ENCODE measurements at regions of chr22 and their contacts with region 1.

Region 1: DNA sequence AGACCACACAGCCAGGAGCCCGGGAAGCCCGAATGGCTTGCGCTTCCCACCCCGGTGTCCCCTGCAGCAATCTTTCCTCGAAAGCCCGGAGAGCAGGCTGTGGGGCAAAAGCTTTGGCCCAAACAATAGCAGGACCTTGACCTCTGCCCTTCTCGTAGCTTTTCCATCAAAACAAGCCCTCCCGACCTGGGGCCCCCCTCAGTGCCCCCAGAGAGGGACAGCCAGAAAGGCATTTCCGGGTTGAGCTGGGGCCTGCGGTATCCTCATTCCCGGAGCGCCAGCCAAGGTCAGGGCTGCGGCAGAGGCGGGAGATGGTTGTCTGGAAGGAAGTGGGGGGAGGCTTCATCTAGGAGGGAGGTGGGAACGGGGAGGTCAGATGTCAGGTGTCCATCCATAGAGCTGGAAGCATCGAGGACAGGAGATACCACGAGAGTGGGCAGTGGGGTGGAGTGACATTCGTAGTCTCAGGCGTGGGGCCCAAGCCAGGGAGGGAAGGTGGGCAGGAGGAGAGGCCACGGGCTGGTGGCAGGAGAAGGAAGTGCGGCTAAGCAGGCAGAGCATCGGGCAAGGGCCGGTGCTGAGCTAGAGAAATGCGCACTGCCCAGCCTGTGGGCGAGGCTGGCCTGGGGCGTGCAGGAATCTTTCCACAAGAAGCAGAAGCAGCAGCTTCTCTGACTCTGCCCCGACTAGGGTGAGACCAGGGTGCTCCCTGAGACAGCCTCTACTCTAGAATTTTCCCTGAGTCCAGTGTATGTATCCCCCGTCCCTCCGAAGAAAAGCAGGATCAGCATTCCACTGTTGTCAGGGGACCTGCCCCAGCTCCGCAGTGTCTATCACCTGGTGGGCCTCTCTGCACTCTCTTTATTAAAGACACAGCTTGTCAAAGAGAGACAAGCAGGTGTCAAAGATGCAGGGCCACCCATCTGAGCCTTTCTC is 14.3 kb downstream of the PDGFB start:
- DNase-seq: no peak
- ATAC-seq: peak; percentile 60 to 67; a peak in 4 of 6 replicates
- H3K4me3 ChIP-seq: no peak overlapping the region
- H3K27ac ChIP-seq: no peak overlapping the region
- H3K4me1 ChIP-seq: peaks cover 2% of the 10 kb centered on the region; the same call in 1 of the 3 replicates
- CTCF ChIP-seq: no peak
- EP300 ChIP-seq: no peak
- POLR2A ChIP-seq: no peak
- RAD21 ChIP-seq: no peak

Region 2: GRCh38 chr22:39240828-39241793 is 10.6 kb after region 1 on chr22:
- CTCF ChIA-PET with region 1: interaction called, 10 read pairs
- POLR2A ChIA-PET with region 1: no interaction called
- DNase-seq: peak; percentile 29 to 61
- ATAC-seq: peak in 1 of 2 experiments; percentile 44; a peak in 3 of 6 replicates
- H3K4me3 ChIP-seq: no peak overlapping the region
- H3K27ac ChIP-seq: peak overlapping the region; percentile 59 to 88
- H3K4me1 ChIP-seq: peaks cover 46% of the 10 kb centered on the region
- CTCF ChIP-seq: no peak
- EP300 ChIP-seq: no peak
- POLR2A ChIP-seq: no peak
- RAD21 ChIP-seq: no peak

Measured in A549 (cell line).